ENCODE measurements at regions of chr12 and their contacts with region 1.

Region 1: GRCh38 chr12:12376646-12377448 is 20.0 kb downstream of the BORCS5 start:
- DNase-seq: peak; percentile 86
- ATAC-seq: peak; percentile 95
- H3K4me3 ChIP-seq: no peak overlapping the region
- H3K27ac ChIP-seq: no peak overlapping the region
- H3K4me1 ChIP-seq: peaks cover 2% of the 10 kb centered on the region; the same call in 1 of the 2 replicates
- H3K27me3 ChIP-seq: no peaks in the 10 kb centered on the region
- CTCF ChIP-seq: peak; percentile 89
- POLR2A ChIP-seq: 0 out of 2 replicates have a peak, but pooled peaks have one; percentile 38
- RAD21 ChIP-seq: peak; percentile 97

Region 2: GRCh38 chr12:12390390-12390789 is 13.5 kb after region 1 on chr12:
- CTCF ChIA-PET with region 1: interaction called, 4 read pairs
- POLR2A ChIA-PET with region 1: no interaction called
- dilution Hi-C with region 1: no loop called
- in situ Hi-C with region 1: no loop called
- intact Hi-C with region 1: loop called (anchors 1 kb)
- DNase-seq: no peak
- ATAC-seq: no peak
- H3K4me3 ChIP-seq: no peak overlapping the region
- H3K27ac ChIP-seq: no peak overlapping the region
- H3K4me1 ChIP-seq: peaks cover 2% of the 10 kb centered on the region; the same call in 1 of the 2 replicates
- H3K27me3 ChIP-seq: no peaks in the 10 kb centered on the region
- CTCF ChIP-seq: no peak
- POLR2A ChIP-seq: no peak
- RAD21 ChIP-seq: no peak

Region 3: DNA sequence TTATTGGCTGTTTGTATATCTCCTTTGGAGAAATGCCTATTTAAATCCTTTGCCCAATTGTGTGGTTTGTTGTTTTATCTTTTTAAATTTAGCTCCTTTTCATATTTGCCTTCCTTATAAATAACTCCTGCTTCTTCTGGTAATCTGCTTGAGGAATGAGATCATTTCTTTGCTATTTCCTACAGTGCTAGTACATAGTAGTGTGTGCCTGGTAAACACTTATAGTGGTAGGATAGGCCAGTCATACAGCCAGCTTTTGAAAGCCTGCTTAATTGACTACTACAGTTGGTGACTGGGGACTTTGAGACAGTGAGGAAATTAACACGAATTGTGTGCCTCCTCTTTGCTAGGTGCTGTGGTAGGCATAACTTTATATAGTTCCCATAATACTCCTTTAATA is 48.8 kb after region 1 on chr12:
- CTCF ChIA-PET with region 1: no interaction called
- POLR2A ChIA-PET with region 1: no interaction called
- dilution Hi-C with region 1: no loop called
- in situ Hi-C with region 1: no loop called
- intact Hi-C with region 1: no loop called
- DNase-seq: peak; percentile 71
- ATAC-seq: peak; percentile 97
- H3K4me3 ChIP-seq: no peak overlapping the region
- H3K27ac ChIP-seq: no peak overlapping the region
- H3K4me1 ChIP-seq: peaks cover 18% of the 10 kb centered on the region
- H3K27me3 ChIP-seq: no peaks in the 10 kb centered on the region
- CTCF ChIP-seq: no peak
- POLR2A ChIP-seq: no peak
- RAD21 ChIP-seq: no peak

Region 4: GRCh38 chr12:12661086-12661485 is 284.2 kb after region 1 on chr12:
- CTCF ChIA-PET with region 1: no interaction called
- POLR2A ChIA-PET with region 1: no interaction called
- dilution Hi-C with region 1: no loop called
- in situ Hi-C with region 1: no loop called
- intact Hi-C with region 1: loop called (anchors 2 kb)
- DNase-seq: peak; percentile 76
- ATAC-seq: peak; percentile 35
- H3K4me3 ChIP-seq: no peak overlapping the region
- H3K27ac ChIP-seq: no peak overlapping the region
- H3K4me1 ChIP-seq: no peaks in the 10 kb centered on the region
- H3K27me3 ChIP-seq: no peaks in the 10 kb centered on the region
- CTCF ChIP-seq: no peak
- POLR2A ChIP-seq: no peak
- RAD21 ChIP-seq: no peak

Region 5: GRCh38 chr12:12696562-12697383 is 319.9 kb after region 1 on chr12:
- CTCF ChIA-PET with region 1: interaction called, 3 read pairs
- POLR2A ChIA-PET with region 1: no interaction called
- dilution Hi-C with region 1: no loop called
- in situ Hi-C with region 1: loop called (anchors 10 kb)
- intact Hi-C with region 1: loop called (anchors 2 kb)
- DNase-seq: peak; percentile 76
- ATAC-seq: peak; percentile 93
- H3K4me3 ChIP-seq: peak overlapping the region; percentile 66
- H3K27ac ChIP-seq: peak overlapping the region; percentile 59
- H3K4me1 ChIP-seq: no peaks in the 10 kb centered on the region
- H3K27me3 ChIP-seq: peaks cover 2% of the 10 kb centered on the region
- CTCF ChIP-seq: no peak
- POLR2A ChIP-seq: peak; percentile 33; the same call in 1 of the 2 replicates
- RAD21 ChIP-seq: no peak

Measured in IMR-90 (cell line).